A549 (cell line): ENCODE measurements at regions of chr2 and their contacts with region 1.

Region 1: DNA sequence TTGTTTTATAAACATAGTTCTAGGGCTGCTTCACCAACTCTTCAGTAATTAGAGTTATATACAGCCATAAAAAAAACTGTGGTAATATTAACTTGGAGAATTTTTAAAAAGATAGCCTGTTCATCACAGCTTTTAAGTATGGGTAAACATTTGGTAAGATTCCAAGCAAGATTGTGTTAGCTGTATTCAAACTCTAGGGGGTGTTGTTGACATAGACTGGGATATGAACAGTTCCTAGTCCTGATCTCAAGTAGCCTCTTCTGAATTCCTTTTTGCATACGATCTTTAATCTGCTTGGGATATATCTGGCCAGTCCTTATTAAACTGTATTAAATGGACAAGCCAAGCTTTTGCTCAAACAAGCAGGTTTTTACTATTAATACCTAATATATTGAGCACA is 13.4 kb downstream of the NOP58 start:
- DNase-seq: peak; percentile 38 to 67
- ATAC-seq: peak; percentile 82 to 86
- H3K4me3 ChIP-seq: no peak overlapping the region; the same call in 2 of the 3 replicates
- H3K27ac ChIP-seq: no peak overlapping the region
- H3K4me1 ChIP-seq: peaks cover 41% of the 10 kb centered on the region
- CTCF ChIP-seq: peak; percentile 54
- EP300 ChIP-seq: no peak
- POLR2A ChIP-seq: no peak
- RAD21 ChIP-seq: peak; percentile 41 to 43; a peak in 4 of 5 replicates

Region 2: GRCh38 chr2:202072226-202072625 is 206.7 kb before region 1 on chr2:
- CTCF ChIA-PET with region 1: no interaction called
- POLR2A ChIA-PET with region 1: no interaction called
- DNase-seq: peak in 1 of 2 experiments; percentile 28
- ATAC-seq: peak; percentile 47 to 71; a peak in 4 of 6 replicates
- H3K4me3 ChIP-seq: no peak overlapping the region
- H3K27ac ChIP-seq: no peak overlapping the region
- H3K4me1 ChIP-seq: no peaks in the 10 kb centered on the region
- CTCF ChIP-seq: no peak; the same call in 1 of the 3 replicates
- EP300 ChIP-seq: no peak
- POLR2A ChIP-seq: no peak
- RAD21 ChIP-seq: no peak

Region 3: DNA sequence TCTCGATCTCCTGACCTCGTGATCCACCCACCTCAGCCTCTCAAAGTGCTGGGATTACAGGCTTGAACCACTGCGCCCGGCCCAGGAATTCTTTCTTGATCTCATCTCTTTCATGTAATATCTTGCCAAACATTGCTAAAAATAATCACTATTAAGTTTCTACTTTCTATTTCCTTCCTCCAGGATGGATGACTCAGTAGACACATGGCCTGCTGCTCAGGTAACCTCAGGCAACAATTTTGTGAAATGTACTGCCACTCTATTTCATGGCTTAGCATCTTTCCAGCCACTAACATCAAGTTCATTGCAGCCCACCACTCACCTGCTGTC is 29.5 kb before region 1 on chr2:
- CTCF ChIA-PET with region 1: no interaction called
- POLR2A ChIA-PET with region 1: no interaction called
- DNase-seq: no peak
- ATAC-seq: no peak
- H3K4me3 ChIP-seq: no peak overlapping the region
- H3K27ac ChIP-seq: no peak overlapping the region
- H3K4me1 ChIP-seq: no peaks in the 10 kb centered on the region
- CTCF ChIP-seq: no peak
- EP300 ChIP-seq: no peak
- POLR2A ChIP-seq: no peak
- RAD21 ChIP-seq: no peak

Region 4: DNA sequence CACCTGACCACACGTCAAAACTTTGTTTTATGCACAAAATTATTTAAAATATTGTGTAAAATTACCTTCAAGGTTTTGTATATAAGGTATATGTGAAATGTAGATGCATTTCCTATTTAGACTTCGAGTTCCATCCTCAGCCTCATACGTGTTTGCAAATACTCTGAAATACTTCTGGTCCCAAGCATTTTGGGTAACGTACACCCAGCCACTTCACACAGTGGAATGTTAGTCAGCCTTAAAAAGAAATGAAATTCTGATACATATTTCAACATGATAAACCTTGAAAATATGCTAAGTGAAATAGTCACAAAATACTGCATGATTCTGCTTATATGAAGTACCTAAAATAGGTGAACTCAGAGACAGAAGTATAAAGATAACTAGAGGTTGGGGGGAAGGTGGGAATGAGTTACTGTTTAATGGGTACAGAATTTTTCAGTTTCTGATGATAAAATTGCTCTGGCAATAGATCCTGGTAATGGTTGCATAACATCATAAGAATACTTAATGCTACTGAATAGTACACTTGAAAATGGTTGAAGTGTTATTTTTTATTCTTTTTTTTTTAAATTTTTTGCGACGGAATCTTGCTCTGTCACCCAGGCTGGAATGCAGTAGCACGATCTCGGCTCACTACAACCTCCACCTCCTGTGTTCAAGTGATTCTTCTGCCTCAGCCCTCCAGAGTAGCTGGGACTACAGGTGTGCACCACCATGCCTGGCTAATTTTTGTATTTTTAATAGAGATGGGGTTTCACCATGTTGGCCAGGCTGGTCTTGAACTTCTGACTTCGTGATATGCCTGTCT is 10.7 kb after region 1 on chr2:
- CTCF ChIA-PET with region 1: interaction called, 14 read pairs
- POLR2A ChIA-PET with region 1: no interaction called
- DNase-seq: no peak
- ATAC-seq: no peak
- H3K4me3 ChIP-seq: no peak overlapping the region
- H3K27ac ChIP-seq: no peak overlapping the region
- H3K4me1 ChIP-seq: no peaks in the 10 kb centered on the region
- CTCF ChIP-seq: no peak
- EP300 ChIP-seq: no peak
- POLR2A ChIP-seq: no peak
- RAD21 ChIP-seq: no peak

Region 5: GRCh38 chr2:202299712-202300111 is 20.8 kb after region 1 on chr2:
- CTCF ChIA-PET with region 1: interaction called, 14 read pairs
- POLR2A ChIA-PET with region 1: no interaction called
- DNase-seq: no peak
- ATAC-seq: no peak
- H3K4me3 ChIP-seq: no peak overlapping the region
- H3K27ac ChIP-seq: no peak overlapping the region
- H3K4me1 ChIP-seq: no peaks in the 10 kb centered on the region
- CTCF ChIP-seq: no peak
- EP300 ChIP-seq: no peak
- POLR2A ChIP-seq: no peak
- RAD21 ChIP-seq: no peak